ENCODE measurements at regions of chr22 and their contacts with region 1.

Region 1: GRCh38 chr22:20016734-20017621 is at the start of gene ARVCF:
- DNase-seq: peak; percentile 77 to 95
- H3K4me3 ChIP-seq: peak within 1 kb of the TSS; percentile 67
- H3K4me1 ChIP-seq: peaks cover 10% of the 10 kb centered on the region
- H3K27me3 ChIP-seq: no peaks in the 10 kb centered on the region

Region 2: GRCh38 chr22:20079745-20080444 is 62.9 kb after region 1 on chr22 and contains the start of gene DGCR8:
- in situ Hi-C with region 1: loop called (anchors 10 kb)
- DNase-seq: peak; percentile 90 to 94
- H3K4me3 ChIP-seq: peak within 1 kb of the TSS; percentile 85
- H3K4me1 ChIP-seq: peaks cover 12% of the 10 kb centered on the region
- H3K27me3 ChIP-seq: no peaks in the 10 kb centered on the region

Region 3: GRCh38 chr22:20319745-20320658 is 303.0 kb after region 1 on chr22 and contains the start of gene DGCR6L:
- in situ Hi-C with region 1: no loop called
- DNase-seq: peak; percentile 83 to 98
- H3K4me3 ChIP-seq: peak within 1 kb of the TSS; percentile 80
- H3K4me1 ChIP-seq: peaks cover 11% of the 10 kb centered on the region
- H3K27me3 ChIP-seq: no peaks in the 10 kb centered on the region

Measured in HAP-1 (cell line).